ENCODE measurements at regions of chr14 and their contacts with region 1.

Region 1: GRCh38 chr14:96962337-96962736 is 165.2 kb downstream of the VRK1 start:
- DNase-seq: peak in 7 of 9 experiments; percentile 13 to 75 (median 22)
- ATAC-seq: peak; percentile 75
- H3K4me3 ChIP-seq: peak overlapping the region in 1 of 2 experiments; percentile 16
- H3K4me3 Mint-ChIP-seq: peak overlapping the region; percentile 64
- H3K27ac ChIP-seq: peak overlapping the region; percentile 29 to 66
- H3K27ac Mint-ChIP-seq: peak overlapping the region; percentile 96
- H3K4me1 ChIP-seq: peaks cover 64% of the 10 kb centered on the region
- H3K4me1 Mint-ChIP-seq: peaks cover 61% of the 10 kb centered on the region
- H3K27me3 ChIP-seq: no peaks in the 10 kb centered on the region
- H3K27me3 Mint-ChIP-seq: no peaks in the 10 kb centered on the region
- CTCF ChIP-seq: no peak

Region 2: GRCh38 chr14:96979611-96980074 is 17.3 kb after region 1 on chr14:
- CTCF ChIA-PET with region 1: interaction called, 5 read pairs
- POLR2A ChIA-PET with region 1: interaction called, 11 read pairs
- intact Hi-C with region 1: no loop called
- DNase-seq: no peak
- ATAC-seq: no peak
- H3K4me3 ChIP-seq: no peak overlapping the region
- H3K4me3 Mint-ChIP-seq: no peak overlapping the region
- H3K27ac ChIP-seq: no peak overlapping the region
- H3K27ac Mint-ChIP-seq: no peak overlapping the region
- H3K4me1 ChIP-seq: no peaks in the 10 kb centered on the region
- H3K4me1 Mint-ChIP-seq: no peaks in the 10 kb centered on the region
- H3K27me3 ChIP-seq: no peaks in the 10 kb centered on the region
- H3K27me3 Mint-ChIP-seq: peaks cover 15% of the 10 kb centered on the region
- CTCF ChIP-seq: no peak